ENCODE measurements at regions of chr7 and their contacts with region 1.

Region 1: DNA sequence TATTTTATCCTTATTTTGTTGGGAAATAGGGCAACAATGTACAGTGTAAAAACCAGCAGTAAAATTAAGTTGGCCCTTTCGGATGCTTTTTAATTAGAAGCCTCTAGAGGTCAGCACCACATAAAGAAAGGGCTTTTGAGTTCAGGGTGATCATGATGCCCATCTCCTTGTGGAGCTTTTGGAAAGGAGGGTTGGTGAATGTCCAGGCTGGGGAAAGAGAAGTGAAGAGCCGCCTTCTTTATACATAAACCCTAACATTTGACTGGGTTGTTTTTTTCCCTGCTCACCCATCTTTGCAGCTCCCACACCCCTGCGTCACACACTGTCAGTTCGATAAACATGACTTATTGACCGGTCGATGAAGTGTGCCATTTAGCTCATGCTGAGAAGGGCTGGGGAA is 29.8 kb downstream of the MTURN start:
- DNase-seq: no peak
- H3K4me3 ChIP-seq: no peak overlapping the region
- CTCF ChIP-seq: peak; percentile 47

Region 2: DNA sequence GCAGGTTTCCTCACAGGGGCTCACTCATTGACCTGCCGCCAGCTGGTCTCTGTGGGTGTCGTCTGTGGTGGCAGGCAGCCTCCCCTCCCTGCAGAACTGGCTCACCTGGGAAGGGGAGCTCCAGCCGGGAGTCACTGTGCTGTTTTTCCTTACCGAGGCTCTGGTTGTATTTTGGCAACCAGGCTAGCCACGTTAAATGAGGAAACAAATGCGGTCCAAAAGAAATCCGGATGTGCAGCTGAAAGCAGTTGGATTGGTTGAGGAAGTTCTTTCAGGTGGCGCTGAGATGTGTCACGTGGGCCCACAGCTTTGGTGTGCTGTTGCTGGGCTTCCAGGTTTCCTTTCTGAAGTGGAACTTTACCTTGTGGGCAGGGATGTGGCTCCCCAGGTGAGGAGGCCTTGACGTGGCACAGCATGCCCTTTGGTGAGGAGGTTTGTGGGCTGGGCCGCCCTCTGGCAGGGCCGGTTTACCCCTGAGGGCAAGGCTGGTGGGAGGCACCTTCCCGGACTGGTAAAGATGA is 15.6 kb before region 1 on chr7:
- CTCF ChIA-PET with region 1: interaction called, 10 read pairs
- POLR2A ChIA-PET with region 1: interaction called, 3 read pairs
- DNase-seq: no peak
- H3K4me3 ChIP-seq: no peak overlapping the region
- CTCF ChIP-seq: no peak